ENCODE measurements at regions of chr17 and their contacts with region 1.

Region 1: GRCh38 chr17:41322094-41322902 is 6.8 kb upstream of the KRTAP17-1 start:
- DNase-seq: peak; percentile 46 to 68
- ATAC-seq: peak; percentile 67 to 79; a peak in 5 of 6 replicates
- H3K4me3 ChIP-seq: no peak overlapping the region
- H3K27ac ChIP-seq: 0 out of 6 replicates have a peak overlapping the region, but pooled peaks of 1 of the 2 experiments have one; percentile 43
- H3K4me1 ChIP-seq: no peaks in the 10 kb centered on the region
- CTCF ChIP-seq: peak; percentile 89
- EP300 ChIP-seq: no peak
- POLR2A ChIP-seq: no peak
- RAD21 ChIP-seq: peak; percentile 78 to 79

Region 2: GRCh38 chr17:40909351-40909750 is 412.9 kb before region 1 on chr17:
- CTCF ChIA-PET with region 1: interaction called, 32 read pairs
- POLR2A ChIA-PET with region 1: no interaction called
- DNase-seq: peak; percentile 91 to 92
- ATAC-seq: peak; percentile 91 to 95
- H3K4me3 ChIP-seq: no peak overlapping the region
- H3K27ac ChIP-seq: peak overlapping the region; percentile 62 to 65
- H3K4me1 ChIP-seq: peaks cover 31% of the 10 kb centered on the region
- CTCF ChIP-seq: peak; percentile 98
- EP300 ChIP-seq: no peak
- POLR2A ChIP-seq: no peak
- RAD21 ChIP-seq: peak; percentile 99 to 100

Region 3: DNA sequence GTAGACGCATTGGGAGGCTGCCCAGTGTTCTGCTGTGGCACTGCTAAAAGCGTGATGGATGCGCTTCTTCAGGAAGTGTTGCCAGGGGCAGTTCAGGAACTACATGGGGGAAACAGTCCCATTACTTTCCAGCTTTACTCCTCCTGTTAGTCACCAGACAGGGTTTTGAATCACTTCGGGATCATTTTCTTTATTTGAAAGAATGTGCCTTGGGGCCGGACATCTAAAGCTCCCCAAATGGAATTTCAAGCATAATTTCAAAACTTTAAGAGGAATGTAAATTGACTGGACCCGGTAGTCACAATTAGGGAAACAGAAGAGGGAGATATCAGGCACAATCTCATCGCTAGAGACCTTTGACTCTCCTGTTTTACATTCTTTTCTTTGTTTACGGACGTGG is 273.8 kb before region 1 on chr17:
- CTCF ChIA-PET with region 1: interaction called, 10 read pairs
- POLR2A ChIA-PET with region 1: no interaction called
- DNase-seq: no peak
- ATAC-seq: peak; percentile 38 to 39; a peak in 2 of 6 replicates
- H3K4me3 ChIP-seq: no peak overlapping the region
- H3K27ac ChIP-seq: no peak overlapping the region
- H3K4me1 ChIP-seq: peaks cover 10% of the 10 kb centered on the region; the same call in 1 of the 3 replicates
- CTCF ChIP-seq: no peak
- EP300 ChIP-seq: no peak
- POLR2A ChIP-seq: no peak
- RAD21 ChIP-seq: no peak

Region 4: GRCh38 chr17:41140360-41141132 is 181.8 kb before region 1 on chr17 and contains the start of gene KRTAP4-6:
- CTCF ChIA-PET with region 1: no interaction called
- POLR2A ChIA-PET with region 1: no interaction called
- DNase-seq: peak in 1 of 2 experiments; percentile 46
- ATAC-seq: no peak
- H3K4me3 ChIP-seq: no peak within 1 kb of the TSS
- H3K27ac ChIP-seq: no peak within 1 kb of the TSS
- H3K4me1 ChIP-seq: no peaks in the 10 kb centered on the region
- CTCF ChIP-seq: no peak
- EP300 ChIP-seq: no peak
- POLR2A ChIP-seq: no peak
- RAD21 ChIP-seq: no peak
- polyA plus RNA-seq, gene KRTAP4-6: not detected in 2 replicates

Region 5: DNA sequence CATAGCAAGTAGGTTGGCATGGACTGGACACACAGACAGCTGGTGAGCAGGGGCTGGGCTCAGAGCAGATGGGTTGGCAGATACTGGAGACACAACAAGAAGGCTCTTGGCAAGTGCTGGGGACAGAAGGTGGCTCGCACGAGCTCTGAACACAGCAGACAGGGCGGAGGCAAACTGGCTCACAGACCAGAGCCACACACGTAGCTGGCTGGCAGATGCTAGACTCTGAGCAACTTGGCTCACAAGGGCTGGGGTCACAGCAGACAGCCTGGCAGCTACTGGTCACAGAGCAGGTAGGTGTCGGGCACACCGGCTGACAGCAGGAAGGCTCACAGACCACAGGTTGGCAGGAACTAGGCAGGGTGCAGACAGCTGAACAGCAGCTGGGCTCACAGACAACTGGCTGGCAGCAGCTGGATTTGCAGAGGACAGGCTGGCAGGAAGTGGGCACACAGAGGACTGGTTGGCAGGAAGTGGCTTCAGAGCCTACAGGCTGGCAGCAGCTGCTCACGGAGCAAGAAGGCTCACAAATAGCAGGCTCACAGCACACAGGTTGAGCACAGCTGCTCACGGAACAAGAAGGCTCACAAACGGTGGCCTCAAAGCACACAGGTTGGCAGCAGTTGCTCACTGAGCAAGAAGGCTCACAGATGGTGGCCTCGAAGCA is 13.9 kb before region 1 on chr17:
- CTCF ChIA-PET with region 1: interaction called, 26 read pairs
- POLR2A ChIA-PET with region 1: no interaction called
- DNase-seq: no peak
- ATAC-seq: peak; percentile 19 to 44; a peak in 1 of 6 replicates
- H3K4me3 ChIP-seq: no peak overlapping the region
- H3K27ac ChIP-seq: no peak overlapping the region
- H3K4me1 ChIP-seq: no peaks in the 10 kb centered on the region
- CTCF ChIP-seq: no peak
- EP300 ChIP-seq: no peak
- POLR2A ChIP-seq: no peak
- RAD21 ChIP-seq: no peak

Region 6: DNA sequence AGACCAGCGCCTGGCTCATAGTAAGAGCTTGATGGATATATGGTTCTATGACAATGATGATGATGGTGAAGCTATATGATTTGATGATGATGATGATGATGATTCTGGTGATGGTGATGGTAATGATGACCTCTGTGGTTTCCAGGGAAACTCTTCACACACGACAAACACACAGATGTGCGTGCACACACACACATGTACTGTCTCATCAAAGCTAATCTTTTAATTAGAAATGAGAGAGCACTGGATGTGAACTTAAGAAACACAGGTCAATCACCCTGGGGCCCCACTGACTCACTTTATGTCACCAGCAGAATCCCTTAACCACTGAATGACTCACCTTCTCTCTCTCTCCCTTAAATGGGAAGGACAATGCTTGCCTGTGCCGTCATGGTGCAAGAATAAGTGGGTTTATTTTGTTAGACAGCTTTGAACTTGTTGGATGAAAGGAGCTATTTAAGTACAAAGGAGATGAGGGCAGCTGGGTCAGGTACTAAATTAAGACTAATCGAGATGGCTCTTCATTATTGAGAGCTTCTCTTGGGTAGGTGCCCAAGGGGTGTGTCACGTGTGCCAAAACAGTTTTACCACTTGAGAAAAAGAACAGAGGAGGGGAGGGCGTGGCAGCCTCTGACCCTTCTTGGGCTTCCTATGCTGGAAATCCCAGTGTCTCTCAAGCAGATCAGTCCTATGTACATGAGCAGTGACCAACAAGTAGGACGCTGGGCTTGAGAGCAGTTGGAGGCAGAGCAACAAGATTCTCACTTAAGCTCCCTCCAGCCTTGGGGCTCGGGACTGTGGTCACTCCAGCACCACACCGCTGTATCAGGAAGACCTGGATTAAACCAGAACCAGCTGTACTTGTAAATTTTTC is 81.7 kb after region 1 on chr17:
- CTCF ChIA-PET with region 1: interaction called, 10 read pairs
- POLR2A ChIA-PET with region 1: no interaction called
- DNase-seq: peak; percentile 77 to 82
- ATAC-seq: peak; percentile 75 to 81; a peak in 5 of 6 replicates
- H3K4me3 ChIP-seq: no peak overlapping the region
- H3K27ac ChIP-seq: peak overlapping the region; percentile 34 to 66; a peak in 5 of 6 replicates
- H3K4me1 ChIP-seq: peaks cover 18% of the 10 kb centered on the region
- CTCF ChIP-seq: no peak
- EP300 ChIP-seq: peak in 1 of 2 experiments; percentile 46; a peak in 1 of 5 replicates
- POLR2A ChIP-seq: no peak
- RAD21 ChIP-seq: no peak

Measured in A549 (cell line).